SK-N-SH (cell line): ENCODE measurements at regions of chr7 and their contacts with region 1.

Region 1: DNA sequence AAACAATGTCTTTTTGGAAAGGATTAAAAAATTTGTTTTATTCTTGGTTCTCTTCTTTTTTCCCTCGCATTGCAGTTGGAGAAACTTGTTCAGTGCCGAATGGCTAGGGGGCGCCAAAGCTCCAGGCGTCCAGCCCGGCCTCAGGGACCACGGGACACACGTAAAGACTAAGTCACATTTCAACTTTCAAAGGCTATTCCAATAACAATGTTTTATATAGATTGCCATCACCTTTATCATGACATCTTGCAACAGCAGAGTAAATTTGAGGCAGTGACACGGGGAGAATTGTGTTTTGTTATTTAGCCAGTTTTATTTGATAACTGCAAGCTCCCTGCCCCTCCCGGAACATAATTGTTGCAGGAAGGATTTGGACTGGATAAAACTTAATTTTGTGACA is 2.2 kb upstream of the IGFBP3 start:
- DNase-seq: peak; percentile 78
- H3K4me3 ChIP-seq: peak overlapping the region in 1 of 2 experiments; percentile 72; a peak in 2 of 4 replicates
- H3K27ac ChIP-seq: peak overlapping the region in 1 of 2 experiments; percentile 18; a peak in 1 of 4 replicates
- H3K4me1 ChIP-seq: peaks cover 26 to 34% of the 10 kb centered on the region in 2 experiments
- H3K27me3 ChIP-seq: no peaks in the 10 kb centered on the region
- CTCF ChIP-seq: peak; percentile 100
- EP300 ChIP-seq: no peak
- RAD21 ChIP-seq: peak; percentile 98

Region 2: GRCh38 chr7:45689011-45689796 is 234.1 kb before region 1 on chr7:
- CTCF ChIA-PET with region 1: no interaction called
- POLR2A ChIA-PET with region 1: no interaction called
- DNase-seq: no peak
- H3K4me3 ChIP-seq: no peak overlapping the region
- H3K27ac ChIP-seq: no peak overlapping the region
- H3K4me1 ChIP-seq: peaks cover 4 to 8% of the 10 kb centered on the region in 2 experiments; a peak in 2 of 4 replicates
- H3K27me3 ChIP-seq: no peaks in the 10 kb centered on the region
- CTCF ChIP-seq: no peak
- EP300 ChIP-seq: no peak
- RAD21 ChIP-seq: no peak

Region 3: DNA sequence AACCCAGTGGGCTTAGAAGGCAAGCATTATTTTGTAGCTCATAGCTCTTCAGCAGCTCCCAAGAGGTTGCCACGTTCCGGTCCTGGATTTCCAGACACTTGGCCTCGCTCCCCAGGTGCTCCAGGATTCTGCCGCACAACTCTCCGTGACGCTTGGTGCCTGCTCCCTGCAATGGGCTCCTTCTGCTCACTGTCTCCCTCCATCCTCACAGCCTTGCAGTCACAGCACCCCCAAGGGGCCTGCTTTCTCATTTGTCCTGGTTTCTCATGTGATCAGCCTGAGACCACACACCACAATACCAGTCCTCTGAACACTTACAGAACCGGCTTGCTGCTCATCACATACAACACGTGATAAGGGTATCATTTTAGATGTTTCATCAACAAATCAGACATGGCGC is 12.0 kb before region 1 on chr7:
- CTCF ChIA-PET with region 1: interaction called, 29 read pairs
- POLR2A ChIA-PET with region 1: no interaction called
- DNase-seq: no peak
- H3K4me3 ChIP-seq: no peak overlapping the region
- H3K27ac ChIP-seq: no peak overlapping the region
- H3K4me1 ChIP-seq: no peaks in the 10 kb centered on the region
- H3K27me3 ChIP-seq: no peaks in the 10 kb centered on the region
- CTCF ChIP-seq: no peak
- EP300 ChIP-seq: no peak
- RAD21 ChIP-seq: no peak

Region 4: DNA sequence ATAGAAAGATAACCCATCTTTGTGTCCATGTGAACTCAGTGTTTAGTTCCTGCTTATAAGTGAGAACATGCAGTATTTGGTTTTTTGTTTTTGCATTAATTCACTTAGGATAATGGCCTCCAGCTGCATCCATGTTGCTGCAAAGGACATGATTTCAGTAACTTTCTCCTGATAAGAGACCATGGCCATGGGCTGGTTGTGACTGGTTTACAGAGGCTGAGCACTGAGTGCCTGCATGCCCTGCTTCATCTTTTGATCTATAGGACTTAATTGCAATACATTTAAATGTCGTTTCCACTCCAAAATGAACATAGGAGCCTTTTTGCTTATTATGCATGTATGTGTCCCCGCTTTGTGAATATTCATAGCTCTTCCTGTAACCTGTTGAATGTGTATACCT is 99.1 kb after region 1 on chr7:
- CTCF ChIA-PET with region 1: interaction called, 14 read pairs
- POLR2A ChIA-PET with region 1: no interaction called
- DNase-seq: peak; percentile 37
- H3K4me3 ChIP-seq: no peak overlapping the region
- H3K27ac ChIP-seq: 0 out of 4 replicates have a peak overlapping the region, but pooled peaks of 1 of the 2 experiments have one; percentile 18
- H3K4me1 ChIP-seq: peaks cover 0 to 2% of the 10 kb centered on the region in 2 experiments; a peak in 2 of 4 replicates
- H3K27me3 ChIP-seq: no peaks in the 10 kb centered on the region
- CTCF ChIP-seq: no peak
- EP300 ChIP-seq: peak in 1 of 2 experiments; percentile 52; a peak in 1 of 4 replicates
- RAD21 ChIP-seq: no peak; the same call in 1 of the 2 replicates

Region 5: DNA sequence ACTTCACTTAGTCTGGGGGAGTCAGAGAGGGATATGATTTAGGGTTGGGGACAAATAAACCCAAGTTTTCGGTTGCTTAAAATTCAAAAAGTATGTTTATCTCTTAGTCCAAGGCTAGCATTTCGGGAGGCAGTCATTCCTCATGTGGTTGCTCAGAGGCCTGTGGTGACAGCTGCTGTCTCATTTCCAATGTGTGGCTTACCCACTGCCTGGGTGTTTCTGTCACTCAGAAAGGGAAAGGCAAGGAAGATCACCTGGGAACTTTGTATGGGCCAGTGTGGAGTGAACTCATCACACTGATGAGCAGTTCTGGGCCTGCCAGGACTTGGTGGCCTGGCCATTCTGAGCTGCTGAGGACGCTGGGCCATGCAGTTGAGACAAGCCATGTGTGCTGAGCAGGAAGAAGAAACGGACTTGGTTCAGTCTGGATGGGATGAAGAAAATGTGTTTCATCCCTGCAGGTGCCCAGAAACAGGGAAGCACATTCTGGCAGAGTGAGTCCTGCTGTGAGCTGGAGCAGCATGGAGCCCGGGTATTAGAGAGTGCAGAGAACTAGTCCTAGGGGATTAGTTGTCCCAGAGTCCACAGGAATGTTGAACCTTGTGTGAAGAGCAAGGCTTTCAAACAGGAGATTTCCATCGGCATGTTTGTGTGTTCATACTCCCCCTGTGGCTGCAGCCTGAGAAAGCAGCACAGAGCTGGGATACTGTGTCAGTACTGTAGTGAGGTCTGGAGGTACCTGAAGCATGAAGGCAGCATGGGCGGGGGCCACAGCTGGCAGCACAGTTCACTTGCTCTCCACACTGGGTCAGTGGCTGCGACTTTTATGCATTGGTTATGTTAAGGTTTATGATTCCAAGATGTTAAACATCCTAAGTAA is 208.9 kb after region 1 on chr7:
- CTCF ChIA-PET with region 1: interaction called, 14 read pairs
- POLR2A ChIA-PET with region 1: no interaction called
- DNase-seq: no peak
- H3K4me3 ChIP-seq: no peak overlapping the region
- H3K27ac ChIP-seq: no peak overlapping the region
- H3K4me1 ChIP-seq: peaks cover 0 to 2% of the 10 kb centered on the region in 2 experiments; a peak in 2 of 4 replicates
- H3K27me3 ChIP-seq: no peaks in the 10 kb centered on the region
- CTCF ChIP-seq: peak; percentile 32; the same call in 1 of the 2 replicates
- EP300 ChIP-seq: no peak
- RAD21 ChIP-seq: peak; percentile 32; the same call in 1 of the 2 replicates

Region 6: DNA sequence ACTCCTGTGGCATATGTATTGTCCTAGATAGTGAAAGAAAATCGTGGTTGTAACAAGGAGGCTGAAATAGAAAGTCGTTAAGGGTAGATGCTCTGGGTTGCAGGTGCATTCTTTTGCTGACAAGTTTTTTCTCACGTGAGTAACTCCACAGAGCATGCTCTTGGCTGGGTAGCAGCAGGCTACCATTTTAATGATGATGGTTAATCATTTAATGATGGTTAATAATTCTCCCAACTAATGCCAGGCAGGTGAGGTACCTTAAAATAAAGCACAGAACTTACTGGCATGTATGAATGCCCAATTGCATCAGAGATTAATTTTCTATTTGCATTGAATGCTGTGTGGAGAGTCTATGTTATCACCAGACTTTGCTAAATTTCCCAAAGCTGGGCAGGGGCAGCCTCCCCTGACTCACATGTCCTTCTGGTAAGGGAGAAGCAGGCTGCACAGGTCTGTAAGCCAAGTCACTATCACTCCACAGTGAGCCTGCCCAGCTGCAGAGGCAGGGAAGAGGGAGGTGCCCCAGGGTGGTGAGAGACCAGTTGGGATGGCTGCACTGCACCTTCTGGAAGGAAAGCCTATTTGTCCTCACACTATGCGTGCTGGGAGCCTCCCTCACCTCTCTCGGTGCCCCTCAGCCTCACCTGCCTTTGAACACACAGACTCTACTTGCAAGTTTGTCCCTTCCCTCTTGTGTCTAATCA is 284.8 kb after region 1 on chr7:
- CTCF ChIA-PET with region 1: no interaction called
- POLR2A ChIA-PET with region 1: no interaction called
- DNase-seq: no peak
- H3K4me3 ChIP-seq: no peak overlapping the region
- H3K27ac ChIP-seq: no peak overlapping the region
- H3K4me1 ChIP-seq: no peaks in the 10 kb centered on the region
- H3K27me3 ChIP-seq: no peaks in the 10 kb centered on the region
- CTCF ChIP-seq: no peak
- EP300 ChIP-seq: no peak
- RAD21 ChIP-seq: no peak

Region 7: GRCh38 chr7:46315891-46316290 is 392.6 kb after region 1 on chr7:
- CTCF ChIA-PET with region 1: interaction called, 16 read pairs
- POLR2A ChIA-PET with region 1: no interaction called
- DNase-seq: no peak
- H3K4me3 ChIP-seq: no peak overlapping the region
- H3K27ac ChIP-seq: no peak overlapping the region
- H3K4me1 ChIP-seq: no peaks in the 10 kb centered on the region
- H3K27me3 ChIP-seq: no peaks in the 10 kb centered on the region
- CTCF ChIP-seq: no peak
- EP300 ChIP-seq: no peak
- RAD21 ChIP-seq: no peak

Region 8: DNA sequence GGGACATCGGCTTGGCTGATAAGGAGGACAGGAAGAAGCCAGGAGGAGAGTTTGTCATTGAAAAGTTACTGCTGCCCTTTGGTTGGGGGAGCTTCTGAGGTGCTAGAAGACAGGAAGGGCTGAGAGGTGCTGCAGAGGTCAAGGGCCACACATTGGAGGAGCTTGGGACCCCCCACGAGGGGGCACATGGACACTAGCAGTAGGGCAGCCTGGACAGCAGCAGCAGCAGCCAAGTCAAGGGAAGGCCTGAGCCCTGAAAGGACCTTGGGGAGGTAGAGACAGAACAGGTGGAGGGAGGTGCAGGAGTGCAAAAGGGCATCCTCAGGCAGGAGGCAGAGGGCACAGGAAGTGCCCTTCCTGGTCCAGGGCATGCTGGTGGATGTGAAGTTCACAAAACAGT is 437.5 kb after region 1 on chr7:
- CTCF ChIA-PET with region 1: interaction called, 47 read pairs
- POLR2A ChIA-PET with region 1: no interaction called
- DNase-seq: no peak
- H3K4me3 ChIP-seq: no peak overlapping the region
- H3K27ac ChIP-seq: no peak overlapping the region
- H3K4me1 ChIP-seq: no peaks in the 10 kb centered on the region
- H3K27me3 ChIP-seq: no peaks in the 10 kb centered on the region
- CTCF ChIP-seq: no peak
- EP300 ChIP-seq: no peak
- RAD21 ChIP-seq: no peak

Region 9: GRCh38 chr7:47195641-47196040 is 1272.4 kb after region 1 on chr7:
- CTCF ChIA-PET with region 1: interaction called, 10 read pairs
- POLR2A ChIA-PET with region 1: no interaction called
- DNase-seq: peak; percentile 34
- H3K4me3 ChIP-seq: no peak overlapping the region
- H3K27ac ChIP-seq: no peak overlapping the region
- H3K4me1 ChIP-seq: peaks cover 0 to 2% of the 10 kb centered on the region in 2 experiments; a peak in 1 of 4 replicates
- H3K27me3 ChIP-seq: peaks cover 31% of the 10 kb centered on the region; the same call in 1 of the 2 replicates
- CTCF ChIP-seq: peak; percentile 51
- EP300 ChIP-seq: no peak
- RAD21 ChIP-seq: no peak